Ovary (tissue), 10 donors: ENCODE measurements at regions of chr9 and their contacts with region 1.

Region 1: DNA sequence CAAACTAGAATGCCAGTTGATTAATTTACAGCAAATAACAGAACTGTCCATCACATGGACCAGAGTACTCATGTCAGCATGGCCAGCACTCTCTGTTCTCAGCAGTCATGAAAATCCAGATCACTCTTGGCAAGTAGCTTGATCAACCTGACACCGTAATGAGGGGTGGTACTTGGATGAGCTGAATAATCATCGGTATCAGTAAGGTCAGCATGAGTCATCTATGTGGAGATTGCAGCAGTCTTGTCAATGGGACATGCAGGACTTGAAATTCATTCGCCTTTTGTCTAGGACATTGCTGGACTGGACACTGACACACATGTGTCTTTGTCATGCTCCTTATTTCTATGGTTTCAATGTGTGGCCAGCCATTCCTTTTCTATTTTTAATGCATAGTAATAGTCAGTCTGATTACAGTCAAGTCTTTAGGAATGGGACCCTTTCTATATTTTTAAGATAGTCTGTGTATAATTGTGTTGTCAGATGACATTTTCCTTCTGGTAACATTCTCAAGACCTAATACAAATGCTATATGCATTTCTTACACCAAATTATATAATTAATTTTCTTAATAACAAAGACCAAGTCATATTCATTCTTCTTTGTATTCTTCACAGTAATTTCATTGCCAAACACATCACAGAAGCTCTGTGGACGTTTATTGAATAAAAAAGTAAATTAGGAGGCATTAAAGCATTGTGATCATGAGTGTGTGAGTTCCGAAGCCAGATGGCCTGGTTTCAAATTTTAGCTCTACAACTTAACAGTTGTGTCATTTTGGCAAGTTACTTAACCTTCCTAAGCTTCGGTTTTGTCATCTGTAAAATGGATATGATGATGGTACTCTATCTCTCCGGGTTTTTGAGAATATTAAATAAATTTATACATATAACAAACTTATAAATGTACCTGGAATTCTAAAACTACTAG is 57.4 kb downstream of the ADAMTSL1 start:
- DNase-seq: no peak
- H3K4me3 ChIP-seq: no peak overlapping the region
- H3K27ac ChIP-seq: no peak overlapping the region
- H3K4me1 ChIP-seq: no peaks in the 10 kb centered on the region
- H3K27me3 ChIP-seq: no peaks in the 10 kb centered on the region
- CTCF ChIP-seq: no peak
- EP300 ChIP-seq: no peak
- POLR2A ChIP-seq: no peak

Region 2: DNA sequence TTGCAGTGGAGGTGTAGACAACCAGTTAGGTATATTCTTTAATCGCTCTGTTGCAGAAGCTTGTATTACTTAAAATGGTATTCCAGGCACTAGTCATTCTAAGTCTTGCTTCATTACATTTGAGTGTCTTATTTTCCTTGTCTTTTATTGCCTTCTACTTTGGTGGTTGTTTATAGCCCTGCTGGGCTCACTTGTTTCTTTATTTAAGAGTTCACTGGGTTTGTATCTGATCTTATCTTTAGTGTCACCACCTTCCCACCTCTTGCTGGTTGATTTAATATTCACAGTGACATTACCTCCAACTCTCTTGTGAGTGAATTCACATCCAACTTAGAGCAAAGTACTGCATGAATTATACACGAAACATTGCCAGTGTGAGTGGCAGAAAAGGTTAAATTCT is 1577.4 kb before region 1 on chr9:
- intact Hi-C with region 1: loop called in 1 of 4 experiments (anchors 5 kb)
- DNase-seq: no peak
- H3K4me3 ChIP-seq: no peak overlapping the region
- H3K27ac ChIP-seq: no peak overlapping the region
- H3K4me1 ChIP-seq: no peaks in the 10 kb centered on the region
- H3K27me3 ChIP-seq: no peaks in the 10 kb centered on the region
- CTCF ChIP-seq: no peak
- EP300 ChIP-seq: no peak
- POLR2A ChIP-seq: no peak

Region 3: GRCh38 chr9:18596920-18597319 is 65.5 kb after region 1 on chr9:
- intact Hi-C with region 1: loop called in 1 of 4 experiments (anchors 5 kb)
- DNase-seq: no peak
- H3K4me3 ChIP-seq: no peak overlapping the region
- H3K27ac ChIP-seq: no peak overlapping the region
- H3K4me1 ChIP-seq: no peaks in the 10 kb centered on the region
- H3K27me3 ChIP-seq: no peaks in the 10 kb centered on the region
- CTCF ChIP-seq: no peak
- EP300 ChIP-seq: no peak
- POLR2A ChIP-seq: no peak